ENCODE measurements at regions of chr21 and their contacts with region 1.

Region 1: DNA sequence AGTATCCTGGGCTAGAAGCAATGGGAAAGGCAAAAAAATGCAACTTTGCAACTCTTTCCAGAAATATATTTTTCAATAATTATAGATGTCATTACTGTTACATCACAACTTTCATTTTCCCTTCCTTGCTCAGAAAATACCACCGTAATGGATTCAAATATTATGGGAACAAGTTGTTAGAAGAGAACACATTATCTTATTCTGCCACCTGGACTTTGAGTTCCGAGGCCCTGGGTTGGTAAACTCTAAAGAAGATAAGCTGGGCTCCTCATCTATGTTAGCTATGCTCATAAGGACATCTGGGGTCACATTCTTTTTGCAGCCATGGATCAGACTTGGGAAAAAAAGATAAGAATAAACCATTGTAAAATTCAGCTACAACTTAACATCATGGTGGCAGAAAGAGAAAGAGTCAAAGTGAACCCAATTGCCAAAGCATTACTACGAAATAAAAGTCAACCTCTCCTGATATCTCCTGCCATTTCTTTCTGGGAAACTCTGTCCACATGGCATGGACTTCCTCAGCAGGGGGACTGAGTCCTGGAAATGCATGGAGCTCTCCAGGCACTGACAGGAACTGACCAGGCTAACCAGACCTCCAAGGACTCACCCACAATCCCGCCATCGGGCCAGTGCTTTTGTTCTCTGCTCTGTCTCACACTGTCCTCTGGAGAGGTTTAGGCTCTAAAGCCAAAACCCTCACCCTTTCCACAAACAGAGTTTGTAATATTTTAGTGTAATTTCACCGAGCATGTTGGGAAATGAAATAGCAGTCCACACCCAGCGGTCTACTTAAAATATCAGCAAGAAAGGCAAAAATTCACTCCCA is 499.1 kb upstream of the RUNX1 start:
- DNase-seq: no peak
- ATAC-seq: no peak
- H3K4me3 ChIP-seq: no peak overlapping the region
- H3K4me3 Mint-ChIP-seq: no peak overlapping the region
- H3K27ac ChIP-seq: no peak overlapping the region
- H3K27ac Mint-ChIP-seq: no peak overlapping the region
- H3K4me1 ChIP-seq: no peaks in the 10 kb centered on the region
- H3K4me1 Mint-ChIP-seq: peaks cover 0 to 4% (median 0%) of the 10 kb centered on the region in 3 donors
- H3K27me3 ChIP-seq: no peaks in the 10 kb centered on the region
- H3K27me3 Mint-ChIP-seq: peaks cover 3 to 15% of the 10 kb centered on the region in 2 donors

Region 2: GRCh38 chr21:35448876-35449599 is 99.1 kb before region 1 on chr21:
- CTCF ChIA-PET with region 1: no interaction called
- POLR2A ChIA-PET with region 1: no interaction called
- DNase-seq: no peak
- ATAC-seq: no peak
- H3K4me3 ChIP-seq: no peak overlapping the region
- H3K4me3 Mint-ChIP-seq: no peak overlapping the region
- H3K27ac ChIP-seq: no peak overlapping the region
- H3K27ac Mint-ChIP-seq: no peak overlapping the region
- H3K4me1 ChIP-seq: no peaks in the 10 kb centered on the region
- H3K4me1 Mint-ChIP-seq: no peaks in the 10 kb centered on the region
- H3K27me3 ChIP-seq: peaks cover 0 to 3% of the 10 kb centered on the region in 2 experiments
- H3K27me3 Mint-ChIP-seq: peaks cover 0 to 10% of the 10 kb centered on the region in 2 donors

Region 3: DNA sequence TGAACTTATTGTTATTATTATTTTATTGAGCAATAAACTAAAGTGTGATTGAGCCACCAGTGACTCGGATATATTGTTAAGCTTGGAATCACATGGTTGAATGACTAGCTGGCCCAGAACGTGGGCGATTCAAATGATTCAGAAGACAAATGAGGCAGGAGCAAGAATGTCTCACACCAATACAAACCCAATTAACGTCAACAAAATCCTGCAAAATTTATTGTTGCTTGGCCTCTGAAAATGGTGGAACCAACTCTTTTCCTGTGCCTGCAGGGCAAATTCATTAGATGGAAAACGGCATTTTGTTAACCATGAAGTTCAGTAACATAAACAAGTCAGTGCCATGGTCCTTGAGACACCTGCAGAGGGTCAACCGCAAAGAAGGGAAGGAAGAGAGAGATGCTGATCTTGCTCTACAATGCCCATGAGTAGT is 30.2 kb after region 1 on chr21:
- CTCF ChIA-PET with region 1: no interaction called
- POLR2A ChIA-PET with region 1: interaction called in 1 of 2 experiments, 11 read pairs
- DNase-seq: no peak
- ATAC-seq: no peak
- H3K4me3 ChIP-seq: no peak overlapping the region
- H3K4me3 Mint-ChIP-seq: no peak overlapping the region
- H3K27ac ChIP-seq: no peak overlapping the region
- H3K27ac Mint-ChIP-seq: no peak overlapping the region
- H3K4me1 ChIP-seq: no peaks in the 10 kb centered on the region
- H3K4me1 Mint-ChIP-seq: no peaks in the 10 kb centered on the region
- H3K27me3 ChIP-seq: no peaks in the 10 kb centered on the region
- H3K27me3 Mint-ChIP-seq: peaks cover 3 to 9% of the 10 kb centered on the region in 2 donors

Region 4: DNA sequence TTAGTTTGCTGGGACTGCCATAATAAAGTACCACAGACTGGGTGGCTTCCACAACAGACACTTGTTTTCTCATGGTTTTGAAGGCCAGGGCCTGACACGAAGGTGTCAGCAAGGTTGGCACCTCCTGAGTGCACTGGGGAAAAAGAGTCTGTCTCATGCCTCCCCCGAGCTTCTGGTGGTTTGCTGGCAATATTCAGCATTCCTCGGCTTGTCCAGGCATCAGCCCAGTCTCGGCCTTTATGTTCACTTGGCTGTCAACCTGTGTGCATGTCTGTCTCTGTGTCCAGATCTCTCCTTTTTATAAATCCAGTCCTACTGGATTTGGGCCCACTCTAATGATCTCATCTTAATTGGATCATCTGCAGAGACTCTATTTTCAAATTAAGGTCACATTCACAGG is 681.0 kb after region 1 on chr21:
- CTCF ChIA-PET with region 1: no interaction called
- POLR2A ChIA-PET with region 1: no interaction called
- DNase-seq: no peak
- ATAC-seq: no peak
- H3K4me3 ChIP-seq: no peak overlapping the region
- H3K4me3 Mint-ChIP-seq: no peak overlapping the region
- H3K27ac ChIP-seq: no peak overlapping the region
- H3K27ac Mint-ChIP-seq: no peak overlapping the region
- H3K4me1 ChIP-seq: peaks cover 0 to 3% of the 10 kb centered on the region in 2 experiments
- H3K4me1 Mint-ChIP-seq: peaks cover 7 to 12% (median 8%) of the 10 kb centered on the region in 3 donors
- H3K27me3 ChIP-seq: no peaks in the 10 kb centered on the region
- H3K27me3 Mint-ChIP-seq: no peaks in the 10 kb centered on the region